CD4-positive, alpha-beta T cell (primary cell): ENCODE measurements at regions of chr1 and their contacts with region 1.

Region 1: GRCh38 chr1:169367486-169368405 is at the starts of genes BLZF1 and NME7:
- DNase-seq: peak; percentile 95 to 99 (median 98)
- ATAC-seq: peak; percentile 95
- H3K4me3 ChIP-seq: peak within 1 kb of the TSS; percentile 65
- H3K4me3 Mint-ChIP-seq: no peak within 1 kb of the TSS
- H3K27ac ChIP-seq: peak within 1 kb of the TSS; percentile 89 to 94
- H3K27ac Mint-ChIP-seq: no peak within 1 kb of the TSS
- H3K4me1 ChIP-seq: peaks cover 8% of the 10 kb centered on the region
- H3K4me1 Mint-ChIP-seq: peaks cover 33% of the 10 kb centered on the region
- H3K27me3 ChIP-seq: no peaks in the 10 kb centered on the region
- H3K27me3 Mint-ChIP-seq: no peaks in the 10 kb centered on the region
- CTCF ChIP-seq: no peak
- total RNA-seq, gene BLZF1: 10.0 to 10.6 TPM
- total RNA-seq, gene NME7: 7.2 to 8.3 TPM

Region 2: GRCh38 chr1:167936068-167936929 is 1431.4 kb before region 1 on chr1 and contains the start of gene DCAF6:
- CTCF ChIA-PET with region 1: no interaction called
- POLR2A ChIA-PET with region 1: interaction called, 3 read pairs
- intact Hi-C with region 1: loop called in 1 of 2 experiments (anchors 5 kb)
- DNase-seq: peak; percentile 93 to 100 (median 96)
- ATAC-seq: peak; percentile 81
- H3K4me3 ChIP-seq: peak within 1 kb of the TSS; percentile 95
- H3K4me3 Mint-ChIP-seq: peak within 1 kb of the TSS; percentile 94
- H3K27ac ChIP-seq: peak within 1 kb of the TSS; percentile 77 to 96
- H3K27ac Mint-ChIP-seq: peak within 1 kb of the TSS; percentile 99
- H3K4me1 ChIP-seq: peaks cover 5% of the 10 kb centered on the region
- H3K4me1 Mint-ChIP-seq: peaks cover 62% of the 10 kb centered on the region
- H3K27me3 ChIP-seq: no peaks in the 10 kb centered on the region
- H3K27me3 Mint-ChIP-seq: no peaks in the 10 kb centered on the region
- CTCF ChIP-seq: no peak
- total RNA-seq, gene DCAF6: 13.3 to 13.6 TPM

Region 3: DNA sequence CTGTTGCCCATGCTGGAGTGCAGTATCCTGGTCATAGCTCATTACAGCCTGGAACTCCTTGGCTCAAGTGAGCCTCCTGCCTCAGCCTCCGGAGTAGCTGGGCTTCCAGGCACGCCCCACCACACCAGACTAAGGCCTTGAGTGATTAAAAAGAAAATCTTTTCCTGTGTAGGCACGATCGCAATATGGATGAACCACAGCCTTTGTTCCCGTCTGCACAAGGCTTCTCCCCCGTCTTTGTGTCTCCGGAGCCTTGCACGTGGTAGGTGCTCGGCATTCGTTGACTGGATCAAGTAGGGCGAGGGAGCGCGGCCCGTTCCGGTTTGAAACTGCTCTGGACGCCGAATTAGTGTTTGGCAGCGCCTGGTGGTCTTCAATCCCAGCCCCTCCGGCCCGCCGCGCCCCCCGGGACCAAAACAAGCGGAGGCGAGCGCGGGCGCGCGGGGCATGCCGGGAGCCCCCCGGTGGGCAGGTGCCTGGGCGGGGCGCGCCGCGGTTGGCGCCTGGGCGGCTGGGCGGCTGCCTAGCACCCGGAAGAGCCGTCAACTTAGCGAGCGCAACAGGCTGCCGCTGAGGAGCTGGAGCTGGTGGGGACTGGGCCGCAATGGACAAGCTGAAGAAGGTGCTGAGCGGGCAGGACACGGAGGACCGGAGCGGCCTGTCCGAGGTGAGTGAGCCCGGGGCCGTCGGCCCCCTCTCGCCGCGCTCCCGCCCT is 1142.1 kb before region 1 on chr1 and contains the start of gene SFT2D2:
- CTCF ChIA-PET with region 1: no interaction called
- POLR2A ChIA-PET with region 1: interaction called, 5 read pairs
- intact Hi-C with region 1: loop called in 1 of 2 experiments (anchors 5 kb)
- DNase-seq: peak; percentile 57 to 89 (median 72)
- ATAC-seq: peak; percentile 96
- H3K4me3 ChIP-seq: peak within 1 kb of the TSS; percentile 94
- H3K4me3 Mint-ChIP-seq: peak within 1 kb of the TSS; percentile 99
- H3K27ac ChIP-seq: peak within 1 kb of the TSS; percentile 28 to 66
- H3K27ac Mint-ChIP-seq: peak within 1 kb of the TSS; percentile 88
- H3K4me1 ChIP-seq: peaks cover 48% of the 10 kb centered on the region
- H3K4me1 Mint-ChIP-seq: peaks cover 54% of the 10 kb centered on the region
- H3K27me3 ChIP-seq: no peaks in the 10 kb centered on the region
- H3K27me3 Mint-ChIP-seq: peaks cover 10% of the 10 kb centered on the region
- CTCF ChIP-seq: no peak
- total RNA-seq, gene SFT2D2: 47.0 to 51.7 TPM

Region 4: GRCh38 chr1:169106095-169106920 is 261.4 kb before region 1 on chr1 and contains the start of gene ATP1B1:
- CTCF ChIA-PET with region 1: no interaction called
- POLR2A ChIA-PET with region 1: no interaction called
- intact Hi-C with region 1: loop called in 1 of 2 experiments (anchors 2 kb)
- DNase-seq: peak; percentile 56 to 88 (median 72)
- ATAC-seq: peak; percentile 89
- H3K4me3 ChIP-seq: peak within 1 kb of the TSS; percentile 74
- H3K4me3 Mint-ChIP-seq: peak within 1 kb of the TSS; percentile 94
- H3K27ac ChIP-seq: no peak within 1 kb of the TSS
- H3K27ac Mint-ChIP-seq: peak within 1 kb of the TSS; percentile 5
- H3K4me1 ChIP-seq: peaks cover 36% of the 10 kb centered on the region
- H3K4me1 Mint-ChIP-seq: peaks cover 43% of the 10 kb centered on the region
- H3K27me3 ChIP-seq: no peaks in the 10 kb centered on the region
- H3K27me3 Mint-ChIP-seq: peaks cover 4% of the 10 kb centered on the region
- CTCF ChIP-seq: no peak
- total RNA-seq, gene ATP1B1: 3.5 to 4.5 TPM

Region 5: DNA sequence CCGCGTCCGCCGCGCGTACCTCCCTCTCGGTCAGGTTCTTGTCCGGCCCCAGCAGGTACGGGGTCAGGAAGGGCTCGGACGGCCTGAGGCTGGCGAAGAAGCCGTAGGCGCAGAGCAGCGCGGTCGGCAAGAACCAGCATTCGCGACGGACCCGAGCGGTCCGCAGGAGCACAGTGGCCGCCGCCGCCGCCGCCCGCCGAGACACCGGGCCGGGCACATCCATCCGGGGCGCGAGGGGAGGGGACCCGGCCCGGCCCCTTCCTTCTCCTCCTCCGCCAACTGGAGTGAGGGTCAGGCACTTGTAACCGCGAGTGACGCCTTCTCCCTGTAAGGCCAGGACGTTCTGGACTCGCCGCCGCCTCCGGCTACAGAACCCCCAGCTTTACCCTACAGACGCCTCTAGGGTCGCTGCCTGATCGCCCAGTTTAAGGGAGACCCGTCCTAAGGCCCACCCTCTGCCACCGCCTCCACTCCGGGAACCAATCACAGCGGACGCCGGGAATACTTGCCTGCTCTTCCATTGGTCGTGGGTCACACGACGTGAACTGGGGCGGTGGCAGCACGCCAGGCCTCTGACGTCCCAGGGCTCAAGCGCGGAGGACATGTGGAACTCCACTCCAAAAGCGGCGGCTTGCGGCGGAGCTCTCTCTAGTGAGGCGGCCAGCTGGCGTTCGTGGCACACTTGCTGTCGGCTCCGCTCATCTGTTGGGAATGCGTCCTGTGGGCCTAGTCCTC is 118.0 kb after region 1 on chr1 and contains the start of gene SLC19A2:
- CTCF ChIA-PET with region 1: no interaction called
- POLR2A ChIA-PET with region 1: interaction called, 5 read pairs
- intact Hi-C with region 1: loop called (anchors 5 kb)
- DNase-seq: peak; percentile 82 to 97 (median 90)
- ATAC-seq: peak; percentile 99
- H3K4me3 ChIP-seq: peak within 1 kb of the TSS; percentile 73
- H3K4me3 Mint-ChIP-seq: peak within 1 kb of the TSS; percentile 98
- H3K27ac ChIP-seq: peak within 1 kb of the TSS; percentile 54 to 65
- H3K27ac Mint-ChIP-seq: peak within 1 kb of the TSS; percentile 92
- H3K4me1 ChIP-seq: peaks cover 20% of the 10 kb centered on the region
- H3K4me1 Mint-ChIP-seq: peaks cover 48% of the 10 kb centered on the region
- H3K27me3 ChIP-seq: no peaks in the 10 kb centered on the region
- H3K27me3 Mint-ChIP-seq: no peaks in the 10 kb centered on the region
- CTCF ChIP-seq: peak; percentile 44
- total RNA-seq, gene SLC19A2: 3.6 to 3.7 TPM

Region 6: DNA sequence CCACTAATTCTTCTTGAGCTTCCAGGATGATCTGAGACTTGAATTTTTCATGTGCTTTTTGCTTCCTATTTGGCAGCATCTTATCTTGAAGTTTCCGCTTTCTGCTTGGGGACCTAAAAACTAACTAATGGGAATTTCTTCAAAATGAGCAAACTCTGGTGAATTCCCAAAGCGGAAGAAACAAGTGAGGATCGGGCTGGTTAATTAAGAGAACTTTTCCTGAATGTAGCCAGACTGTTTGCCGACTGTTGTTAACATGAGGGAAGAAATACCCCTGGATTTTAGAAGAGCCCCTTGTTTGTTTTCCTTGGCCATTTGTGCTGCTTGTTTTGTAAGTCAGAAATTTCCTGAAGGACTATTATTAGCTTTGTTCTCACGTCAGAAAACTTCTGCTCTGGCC is 372.2 kb after region 1 on chr1:
- CTCF ChIA-PET with region 1: no interaction called
- POLR2A ChIA-PET with region 1: no interaction called
- intact Hi-C with region 1: no loop called
- DNase-seq: no peak
- ATAC-seq: no peak
- H3K4me3 ChIP-seq: no peak overlapping the region
- H3K4me3 Mint-ChIP-seq: no peak overlapping the region
- H3K27ac ChIP-seq: no peak overlapping the region
- H3K27ac Mint-ChIP-seq: no peak overlapping the region
- H3K4me1 ChIP-seq: no peaks in the 10 kb centered on the region
- H3K4me1 Mint-ChIP-seq: no peaks in the 10 kb centered on the region
- H3K27me3 ChIP-seq: peaks cover 0 to 12% of the 10 kb centered on the region in 2 experiments
- H3K27me3 Mint-ChIP-seq: peaks cover 15% of the 10 kb centered on the region
- CTCF ChIP-seq: no peak

Region 7: GRCh38 chr1:169794530-169795416 is 427.0 kb after region 1 on chr1 and contains the start of gene METTL18:
- CTCF ChIA-PET with region 1: no interaction called
- POLR2A ChIA-PET with region 1: interaction called, 11 read pairs
- intact Hi-C with region 1: loop called (anchors 2 to 5 kb)
- DNase-seq: peak; percentile 82 to 96 (median 88)
- ATAC-seq: peak; percentile 97
- H3K4me3 ChIP-seq: peak within 1 kb of the TSS; percentile 81
- H3K4me3 Mint-ChIP-seq: peak within 1 kb of the TSS; percentile 99
- H3K27ac ChIP-seq: peak within 1 kb of the TSS; percentile 89 to 94
- H3K27ac Mint-ChIP-seq: peak within 1 kb of the TSS; percentile 94
- H3K4me1 ChIP-seq: peaks cover 13% of the 10 kb centered on the region
- H3K4me1 Mint-ChIP-seq: peaks cover 52% of the 10 kb centered on the region
- H3K27me3 ChIP-seq: no peaks in the 10 kb centered on the region
- H3K27me3 Mint-ChIP-seq: no peaks in the 10 kb centered on the region
- CTCF ChIP-seq: no peak
- total RNA-seq, gene METTL18: 5.1 to 5.6 TPM

Region 8: GRCh38 chr1:170531758-170532657 is 1164.3 kb after region 1 on chr1 and contains the start of gene GORAB:
- CTCF ChIA-PET with region 1: no interaction called
- POLR2A ChIA-PET with region 1: no interaction called
- intact Hi-C with region 1: loop called in 1 of 2 experiments (anchors 10 kb)
- DNase-seq: peak; percentile 69 to 92 (median 78)
- ATAC-seq: peak; percentile 91
- H3K4me3 ChIP-seq: peak within 1 kb of the TSS; percentile 61
- H3K4me3 Mint-ChIP-seq: no peak within 1 kb of the TSS
- H3K27ac ChIP-seq: peak within 1 kb of the TSS; percentile 73 to 86
- H3K27ac Mint-ChIP-seq: no peak within 1 kb of the TSS
- H3K4me1 ChIP-seq: peaks cover 12% of the 10 kb centered on the region
- H3K4me1 Mint-ChIP-seq: peaks cover 20% of the 10 kb centered on the region
- H3K27me3 ChIP-seq: no peaks in the 10 kb centered on the region
- H3K27me3 Mint-ChIP-seq: no peaks in the 10 kb centered on the region
- CTCF ChIP-seq: no peak
- total RNA-seq, gene GORAB: 23.0 to 26.6 TPM